ENCODE measurements at regions of chr10 and their contacts with region 1.

Region 1: GRCh38 chr10:30857803-30858202 is 173.9 kb downstream of the ZNF438 start:
- DNase-seq: peak; percentile 50
- H3K4me3 ChIP-seq: no peak overlapping the region
- H3K27ac ChIP-seq: peak overlapping the region; percentile 97
- H3K4me1 ChIP-seq: peaks cover 63% of the 10 kb centered on the region
- H3K27me3 ChIP-seq: no peaks in the 10 kb centered on the region
- CTCF ChIP-seq: no peak
- POLR2A ChIP-seq: no peak

Region 2: GRCh38 chr10:30820261-30820991 is 37.4 kb before region 1 on chr10:
- CTCF ChIA-PET with region 1: no interaction called
- POLR2A ChIA-PET with region 1: no interaction called
- dilution Hi-C with region 1: no loop called
- intact Hi-C with region 1: loop called (anchors 1 kb)
- DNase-seq: peak; percentile 98
- H3K4me3 ChIP-seq: no peak overlapping the region
- H3K27ac ChIP-seq: peak overlapping the region; percentile 94
- H3K4me1 ChIP-seq: peaks cover 48% of the 10 kb centered on the region
- H3K27me3 ChIP-seq: no peaks in the 10 kb centered on the region
- CTCF ChIP-seq: no peak
- POLR2A ChIP-seq: peak; percentile 29

Region 3: DNA sequence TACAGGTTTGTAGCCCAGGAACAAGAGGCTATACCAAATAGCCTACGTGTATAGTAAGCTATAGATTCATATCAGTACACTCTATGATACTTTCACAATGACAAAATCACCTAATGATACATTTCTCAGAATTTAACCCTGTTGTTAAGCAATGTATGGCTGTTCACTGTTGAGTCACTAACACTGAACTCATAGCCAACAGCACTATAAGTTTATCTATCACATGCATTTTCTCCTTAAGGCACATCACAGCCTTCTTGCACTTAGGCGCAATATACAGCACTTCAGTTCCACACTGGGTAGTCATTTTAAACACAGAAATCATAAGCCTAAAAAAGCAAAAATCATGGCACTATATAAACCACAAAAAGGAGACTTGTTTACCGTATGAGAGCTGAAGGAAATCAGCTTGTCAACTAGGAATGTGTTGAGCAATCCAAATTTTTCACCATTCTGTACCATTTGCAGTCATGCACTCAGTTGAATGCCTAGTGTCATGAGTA is 128.3 kb after region 1 on chr10:
- CTCF ChIA-PET with region 1: no interaction called
- POLR2A ChIA-PET with region 1: no interaction called
- dilution Hi-C with region 1: no loop called
- intact Hi-C with region 1: loop called (anchors 1 kb)
- DNase-seq: peak; percentile 69
- H3K4me3 ChIP-seq: no peak overlapping the region
- H3K27ac ChIP-seq: peak overlapping the region; percentile 93
- H3K4me1 ChIP-seq: peaks cover 56% of the 10 kb centered on the region
- H3K27me3 ChIP-seq: no peaks in the 10 kb centered on the region
- CTCF ChIP-seq: no peak
- POLR2A ChIP-seq: no peak

Region 4: GRCh38 chr10:31004611-31005193 is 146.9 kb after region 1 on chr10:
- CTCF ChIA-PET with region 1: no interaction called
- POLR2A ChIA-PET with region 1: no interaction called
- dilution Hi-C with region 1: no loop called
- intact Hi-C with region 1: loop called (anchors 1 kb)
- DNase-seq: peak; percentile 97
- H3K4me3 ChIP-seq: peak overlapping the region in 1 of 3 experiments; percentile 11
- H3K27ac ChIP-seq: peak overlapping the region; percentile 95
- H3K4me1 ChIP-seq: peaks cover 70% of the 10 kb centered on the region
- H3K27me3 ChIP-seq: no peaks in the 10 kb centered on the region
- CTCF ChIP-seq: no peak
- POLR2A ChIP-seq: peak; percentile 67

Region 5: GRCh38 chr10:31404640-31405039 is 546.8 kb after region 1 on chr10:
- CTCF ChIA-PET with region 1: no interaction called
- POLR2A ChIA-PET with region 1: no interaction called
- dilution Hi-C with region 1: no loop called
- intact Hi-C with region 1: no loop called
- DNase-seq: no peak
- H3K4me3 ChIP-seq: no peak overlapping the region
- H3K27ac ChIP-seq: no peak overlapping the region
- H3K4me1 ChIP-seq: peaks cover 3% of the 10 kb centered on the region
- H3K27me3 ChIP-seq: no peaks in the 10 kb centered on the region
- CTCF ChIP-seq: no peak
- POLR2A ChIP-seq: no peak